Right cardiac atrium (tissue), 5 donors: ENCODE measurements at regions of chr20 and their contacts with region 1.

Region 1: DNA sequence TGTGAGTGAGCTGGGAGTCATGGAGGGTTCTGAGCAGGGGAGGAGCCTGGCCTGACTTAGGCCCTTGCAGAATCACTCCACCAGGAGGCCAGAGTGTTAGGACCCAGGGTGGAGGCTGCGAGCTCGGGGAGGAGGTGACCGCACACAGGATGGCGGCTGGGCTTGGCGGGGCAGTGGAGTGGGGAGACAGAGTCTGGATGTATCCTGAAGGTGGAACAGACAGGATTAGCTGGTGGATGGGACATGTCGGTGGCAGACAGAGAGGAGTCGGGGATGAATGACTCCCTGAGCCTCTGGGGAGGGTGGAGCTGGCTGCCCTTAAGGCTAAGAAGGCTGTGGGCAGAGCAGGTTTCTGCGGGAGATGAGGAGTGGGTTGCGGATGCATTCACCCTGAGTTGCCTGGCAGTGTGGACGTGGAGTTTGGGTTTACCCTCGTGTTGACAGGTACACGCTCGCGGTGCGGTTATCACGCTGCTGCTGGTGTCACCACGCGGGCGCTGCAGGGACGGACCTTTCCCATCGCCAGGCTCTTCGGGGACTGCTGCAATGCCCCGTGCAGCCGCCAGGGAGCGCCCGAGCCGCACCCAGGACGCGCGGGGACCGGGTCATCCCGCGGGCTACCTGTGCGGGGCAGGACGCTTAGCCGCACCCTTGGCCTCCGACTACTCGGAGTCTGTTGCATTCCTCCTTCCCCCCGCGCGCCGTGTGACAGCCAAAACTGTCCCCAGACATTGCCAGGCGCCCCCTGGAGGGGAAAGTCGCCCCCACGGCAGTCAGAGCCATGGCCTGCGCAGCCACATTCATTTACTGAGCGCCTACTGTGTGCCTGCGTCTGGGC is 43.0 kb upstream of the PTGIS start:
- DNase-seq: peak; percentile 72 to 90 (median 90)
- ATAC-seq: peak; percentile 71 to 77
- H3K4me3 ChIP-seq: no peak overlapping the region
- H3K27ac ChIP-seq: no peak overlapping the region
- H3K4me1 ChIP-seq: peaks cover 4% of the 10 kb centered on the region
- H3K27me3 ChIP-seq: no peaks in the 10 kb centered on the region

Region 2: GRCh38 chr20:49330544-49331239 is 280.2 kb before region 1 on chr20:
- intact Hi-C with region 1: loop called in 2 of 4 experiments (anchors 5 to 10 kb)
- DNase-seq: no peak
- ATAC-seq: no peak
- H3K4me3 ChIP-seq: no peak overlapping the region
- H3K27ac ChIP-seq: no peak overlapping the region
- H3K4me1 ChIP-seq: no peaks in the 10 kb centered on the region
- H3K27me3 ChIP-seq: no peaks in the 10 kb centered on the region

Region 3: DNA sequence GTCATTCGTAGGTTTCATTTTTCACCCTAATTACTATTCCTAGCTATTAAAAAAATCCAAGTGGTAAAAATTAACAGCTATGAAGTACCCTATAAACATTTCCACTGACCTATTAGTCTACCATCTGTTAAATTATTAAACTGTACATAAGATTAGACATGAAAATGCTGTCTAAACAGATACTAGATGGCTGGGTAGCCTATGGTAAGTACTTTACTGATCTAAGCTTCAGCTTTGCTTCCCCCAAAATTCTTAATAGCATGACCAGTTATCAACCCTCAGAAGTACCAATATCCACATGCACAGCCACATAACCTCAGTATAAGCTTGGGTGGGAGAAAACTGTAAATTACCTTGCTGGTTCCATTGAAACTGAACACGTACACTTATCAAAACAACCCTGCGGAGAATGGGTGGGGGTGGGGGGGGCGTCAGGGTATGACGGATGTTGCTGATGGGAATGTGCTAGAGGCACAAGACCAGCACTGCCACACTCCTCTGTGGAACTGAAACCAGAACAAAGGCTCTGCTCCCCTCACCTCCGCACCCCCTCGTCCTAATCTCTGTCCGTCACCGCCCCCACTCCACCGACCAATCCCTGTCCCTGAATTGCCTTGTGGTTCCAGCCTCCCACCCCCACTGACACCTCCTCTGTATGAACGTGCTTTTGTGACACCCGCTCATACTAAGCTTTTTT is 57.4 kb after region 1 on chr20:
- intact Hi-C with region 1: no loop called
- DNase-seq: peak; percentile 34 to 79 (median 73)
- ATAC-seq: peak; percentile 78 to 91
- H3K4me3 ChIP-seq: no peak overlapping the region
- H3K27ac ChIP-seq: no peak overlapping the region
- H3K4me1 ChIP-seq: peaks cover 2% of the 10 kb centered on the region
- H3K27me3 ChIP-seq: no peaks in the 10 kb centered on the region

Region 4: GRCh38 chr20:49812463-49813304 is 201.8 kb after region 1 on chr20 and contains the start of gene SLC9A8:
- intact Hi-C with region 1: loop called in 1 of 4 experiments (anchors 10 kb)
- DNase-seq: peak; percentile 93 to 96 (median 95)
- ATAC-seq: peak; percentile 97 to 98
- H3K4me3 ChIP-seq: peak within 1 kb of the TSS; percentile 87
- H3K27ac ChIP-seq: peak within 1 kb of the TSS; percentile 89
- H3K4me1 ChIP-seq: peaks cover 8% of the 10 kb centered on the region
- H3K27me3 ChIP-seq: no peaks in the 10 kb centered on the region
- total RNA-seq, gene SLC9A8: 6.9 to 7.3 (median 7.3) TPM

Region 5: DNA sequence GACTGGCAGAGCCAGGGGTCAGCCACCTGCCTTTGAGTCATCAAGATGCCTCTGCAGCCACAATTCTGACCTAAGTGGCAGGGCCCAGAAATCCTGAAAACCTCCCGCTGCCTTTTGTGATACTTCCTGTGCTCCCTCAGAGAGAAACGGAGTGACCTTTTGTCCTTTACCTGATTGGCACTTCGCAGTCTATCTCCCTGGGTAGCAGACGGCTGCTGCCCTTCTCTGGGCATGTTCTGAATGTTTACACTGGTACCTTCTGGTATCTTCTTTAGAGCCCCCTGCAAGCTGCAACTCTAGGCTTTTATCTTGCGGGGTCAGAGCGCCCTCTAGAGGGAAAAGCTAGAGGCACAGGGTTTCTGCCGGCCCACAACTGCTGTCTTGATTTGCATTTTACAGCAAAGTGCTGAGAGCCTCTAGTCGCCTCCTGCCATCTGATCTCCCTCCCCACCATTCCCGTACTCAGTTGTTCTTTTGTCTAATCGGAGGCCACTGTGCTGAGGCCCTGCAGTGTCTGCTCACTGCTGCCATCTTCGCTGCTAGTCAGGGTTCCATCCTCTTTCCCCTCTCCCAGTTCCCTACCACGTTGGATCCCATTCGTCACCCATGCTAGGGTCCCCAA is 277.5 kb after region 1 on chr20:
- intact Hi-C with region 1: loop called in 1 of 4 experiments (anchors 5 kb)
- DNase-seq: peak in 2 of 3 donors; percentile 41 to 62
- ATAC-seq: no peak
- H3K4me3 ChIP-seq: no peak overlapping the region
- H3K27ac ChIP-seq: no peak overlapping the region
- H3K4me1 ChIP-seq: peaks cover 12% of the 10 kb centered on the region
- H3K27me3 ChIP-seq: no peaks in the 10 kb centered on the region